SK-N-SH (cell line): ENCODE measurements at regions of chr12 and their contacts with region 1.

Region 1: GRCh38 chr12:120580787-120581723 is at the start of gene POP5:
- DNase-seq: peak; percentile 93
- H3K4me3 ChIP-seq: peak within 1 kb of the TSS; percentile 82 to 97
- H3K27ac ChIP-seq: peak within 1 kb of the TSS; percentile 25 to 71; a peak in 3 of 4 replicates
- H3K4me1 ChIP-seq: peaks cover 0 to 8% of the 10 kb centered on the region in 2 experiments; a peak in 2 of 4 replicates
- H3K27me3 ChIP-seq: no peaks in the 10 kb centered on the region
- CTCF ChIP-seq: no peak
- EP300 ChIP-seq: no peak
- RAD21 ChIP-seq: no peak
- polyA plus RNA-seq, gene POP5: 129 and 148 TPM in 2 replicates

Region 2: DNA sequence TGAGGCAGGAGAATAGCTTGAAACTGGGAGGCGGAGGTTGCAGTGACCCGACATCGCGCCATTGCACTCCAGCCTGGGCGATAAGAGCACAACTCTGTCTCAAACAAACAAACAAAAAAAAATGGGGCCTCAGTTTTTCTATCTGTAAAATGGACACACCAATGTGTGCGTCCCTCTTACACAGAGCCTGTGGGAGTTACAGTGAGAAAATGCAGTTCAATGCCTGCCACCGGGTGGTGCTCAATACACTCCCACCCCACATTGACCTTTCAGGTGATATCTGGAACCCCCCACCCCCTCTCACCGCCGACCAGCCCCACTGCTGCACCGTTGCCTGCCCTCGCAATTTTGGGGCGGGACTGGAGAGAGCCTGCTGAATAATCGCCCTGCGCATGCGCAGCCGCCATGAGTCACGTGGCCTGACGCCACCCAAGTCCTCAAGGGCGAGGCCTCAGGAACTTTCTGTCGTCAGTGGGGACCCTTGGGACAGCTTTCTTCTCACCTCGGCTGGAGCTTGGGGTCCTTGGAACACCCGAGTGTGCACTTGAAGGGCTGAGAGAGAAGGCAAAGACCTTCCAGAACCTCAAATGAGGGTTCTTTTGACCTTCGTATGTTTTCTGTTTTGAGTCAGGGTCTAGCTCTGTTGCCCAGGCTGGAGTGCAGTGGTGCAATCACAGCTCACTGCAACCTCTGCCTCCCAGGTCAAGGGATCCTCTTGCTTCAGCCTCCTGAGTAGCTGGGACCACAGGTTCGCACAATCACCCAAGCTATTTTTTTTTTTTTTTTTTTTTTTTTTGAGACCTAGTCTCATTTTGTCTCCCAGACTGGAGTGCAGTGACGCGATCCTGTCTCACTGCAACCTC is 44.7 kb after region 1 on chr12:
- CTCF ChIA-PET with region 1: interaction called, 11 read pairs
- POLR2A ChIA-PET with region 1: no interaction called
- DNase-seq: peak; percentile 55
- H3K4me3 ChIP-seq: no peak overlapping the region
- H3K27ac ChIP-seq: no peak overlapping the region
- H3K4me1 ChIP-seq: peaks cover 0 to 11% of the 10 kb centered on the region in 2 experiments; a peak in 1 of 4 replicates
- H3K27me3 ChIP-seq: no peaks in the 10 kb centered on the region
- CTCF ChIP-seq: peak; percentile 31; the same call in 1 of the 2 replicates
- EP300 ChIP-seq: no peak
- RAD21 ChIP-seq: 0 out of 2 replicates have a peak, but pooled peaks have one; percentile 22

Region 3: DNA sequence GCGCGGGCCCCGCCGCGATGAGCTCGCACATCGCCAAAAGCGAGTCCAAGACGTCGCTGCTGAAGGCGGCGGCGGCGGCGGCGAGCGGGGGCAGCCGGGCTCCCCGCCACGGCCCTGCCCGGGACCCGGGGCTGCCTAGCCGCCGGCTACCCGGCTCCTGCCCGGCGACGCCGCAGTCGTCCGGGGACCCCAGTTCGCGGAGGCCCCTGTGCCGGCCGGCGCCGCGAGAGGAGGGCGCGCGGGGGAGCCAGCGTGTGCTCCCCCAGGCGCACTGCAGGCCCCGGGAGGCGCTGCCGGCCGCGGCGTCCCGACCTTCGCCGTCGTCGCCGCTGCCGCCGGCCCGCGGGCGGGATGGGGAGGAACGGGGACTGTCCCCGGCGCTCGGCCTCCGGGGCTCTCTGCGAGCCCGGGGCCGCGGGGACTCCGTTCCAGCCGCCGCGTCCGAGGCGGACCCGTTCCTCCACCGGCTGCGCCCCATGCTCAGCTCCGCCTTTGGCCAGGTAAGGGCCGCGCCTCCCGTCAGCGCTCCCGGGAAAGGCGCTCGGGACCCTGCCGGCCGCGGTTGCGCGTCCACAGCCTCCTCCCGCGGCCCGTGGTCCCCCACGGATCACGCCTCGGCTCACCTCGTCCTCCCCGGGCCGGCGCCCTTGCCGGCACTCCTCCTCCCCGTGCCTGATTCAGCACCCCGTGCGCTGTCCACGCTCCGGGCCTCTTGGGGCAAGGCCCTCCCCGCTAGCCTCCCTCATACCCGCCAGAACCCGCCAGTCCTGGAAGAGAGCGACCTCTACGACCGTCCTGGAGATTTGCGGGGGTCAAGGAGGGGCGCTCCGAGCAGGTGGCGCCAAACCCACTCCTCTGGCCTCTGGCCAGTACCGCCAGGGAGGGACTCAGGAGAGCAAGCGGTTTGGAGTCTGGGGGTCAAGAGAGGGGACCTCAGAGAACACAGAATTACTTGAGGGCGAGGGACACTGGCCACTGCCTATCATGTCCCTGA is 60.1 kb after region 1 on chr12:
- CTCF ChIA-PET with region 1: interaction called, 94 read pairs
- POLR2A ChIA-PET with region 1: no interaction called
- DNase-seq: peak; percentile 71
- H3K4me3 ChIP-seq: peak overlapping the region; percentile 38 to 48; a peak in 3 of 4 replicates
- H3K27ac ChIP-seq: no peak overlapping the region
- H3K4me1 ChIP-seq: peaks cover 0 to 6% of the 10 kb centered on the region in 2 experiments; a peak in 1 of 4 replicates
- H3K27me3 ChIP-seq: peaks cover 58% of the 10 kb centered on the region
- CTCF ChIP-seq: no peak
- EP300 ChIP-seq: no peak
- RAD21 ChIP-seq: no peak

Region 4: GRCh38 chr12:120710031-120710804 is 129.2 kb after region 1 on chr12 and contains the start of gene UNC119B:
- CTCF ChIA-PET with region 1: interaction called, 37 read pairs
- POLR2A ChIA-PET with region 1: interaction called, 3 read pairs
- DNase-seq: peak; percentile 96
- H3K4me3 ChIP-seq: peak within 1 kb of the TSS; percentile 78 to 90
- H3K27ac ChIP-seq: peak within 1 kb of the TSS; percentile 63 to 79; a peak in 3 of 4 replicates
- H3K4me1 ChIP-seq: peaks cover 0 to 29% of the 10 kb centered on the region in 2 experiments; a peak in 2 of 4 replicates
- H3K27me3 ChIP-seq: no peaks in the 10 kb centered on the region
- CTCF ChIP-seq: no peak
- EP300 ChIP-seq: no peak
- RAD21 ChIP-seq: no peak
- polyA plus RNA-seq, gene UNC119B: 23.6 and 32.0 TPM in 2 replicates

Region 5: GRCh38 chr12:120720234-120720986 is 139.4 kb after region 1 on chr12:
- CTCF ChIA-PET with region 1: interaction called, 11 read pairs
- POLR2A ChIA-PET with region 1: no interaction called
- DNase-seq: no peak
- H3K4me3 ChIP-seq: no peak overlapping the region
- H3K27ac ChIP-seq: peak overlapping the region; percentile 50 to 73
- H3K4me1 ChIP-seq: peaks cover 5 to 33% of the 10 kb centered on the region in 2 experiments; a peak in 3 of 4 replicates
- H3K27me3 ChIP-seq: no peaks in the 10 kb centered on the region
- CTCF ChIP-seq: no peak
- EP300 ChIP-seq: no peak
- RAD21 ChIP-seq: no peak

Region 6: DNA sequence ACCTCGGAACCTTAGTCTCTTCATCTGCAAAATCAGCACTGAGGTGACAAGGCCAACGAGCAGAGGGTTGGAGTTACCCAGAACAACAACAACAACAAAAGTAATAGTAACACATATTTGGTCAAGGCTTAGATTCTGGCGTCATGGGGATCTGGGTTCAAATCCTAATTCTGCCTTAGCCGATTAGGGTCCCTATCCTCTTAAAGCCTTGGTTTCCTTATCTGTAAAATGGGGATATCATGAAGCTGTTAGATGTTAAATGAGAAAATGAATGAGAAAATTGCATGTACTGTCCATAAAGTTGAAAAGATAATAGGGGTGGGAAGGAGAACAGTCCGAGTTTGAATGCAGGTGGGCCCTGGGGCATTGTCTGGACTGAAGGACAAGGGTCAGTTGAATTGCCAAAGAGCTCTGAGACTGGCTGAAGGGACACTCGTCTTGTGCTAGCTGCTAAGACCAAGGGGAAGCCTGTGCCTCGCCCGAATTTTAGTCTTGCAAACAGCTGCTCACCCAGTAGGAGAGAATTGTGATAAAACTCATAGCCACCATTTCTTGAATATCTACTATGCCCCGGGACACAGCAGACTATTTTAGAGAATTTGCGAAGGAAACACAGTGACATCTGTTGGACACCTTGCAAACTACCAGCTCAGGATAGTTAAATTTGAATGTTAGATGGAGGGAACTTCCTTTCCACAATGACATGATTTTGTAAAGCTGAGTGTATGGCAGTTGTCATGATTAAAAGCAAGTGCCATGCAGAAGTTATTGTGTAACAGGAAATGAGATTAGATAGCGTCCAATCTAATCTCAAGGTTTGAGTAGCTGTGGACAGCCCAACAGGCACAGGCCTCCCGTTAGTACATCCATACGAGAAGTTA is 390.5 kb after region 1 on chr12:
- CTCF ChIA-PET with region 1: interaction called, 35 read pairs
- POLR2A ChIA-PET with region 1: no interaction called
- DNase-seq: peak; percentile 78
- H3K4me3 ChIP-seq: no peak overlapping the region
- H3K27ac ChIP-seq: no peak overlapping the region
- H3K4me1 ChIP-seq: peaks cover 0 to 2% of the 10 kb centered on the region in 2 experiments; a peak in 1 of 4 replicates
- H3K27me3 ChIP-seq: no peaks in the 10 kb centered on the region; the same call in 1 of the 2 replicates
- CTCF ChIP-seq: peak; percentile 78
- EP300 ChIP-seq: peak in 1 of 2 experiments; percentile 17; a peak in 1 of 4 replicates
- RAD21 ChIP-seq: peak; percentile 91